ENCODE measurements at regions of chr4 and their contacts with region 1.

Region 1: GRCh38 chr4:121307445-121308327 is 73.1 kb downstream of the QRFPR start:
- DNase-seq: peak in 1 of 2 experiments; percentile 7
- H3K4me3 ChIP-seq: no peak overlapping the region
- H3K27ac ChIP-seq: no peak overlapping the region
- H3K4me1 ChIP-seq: no peaks in the 10 kb centered on the region
- H3K27me3 ChIP-seq: no peaks in the 10 kb centered on the region
- CTCF ChIP-seq: peak in 2 of 3 experiments; percentile 83 to 85; a peak in 3 of 4 replicates
- EP300 ChIP-seq: no peak
- POLR2A ChIP-seq: no peak
- RAD21 ChIP-seq: peak; percentile 94 to 95

Region 2: DNA sequence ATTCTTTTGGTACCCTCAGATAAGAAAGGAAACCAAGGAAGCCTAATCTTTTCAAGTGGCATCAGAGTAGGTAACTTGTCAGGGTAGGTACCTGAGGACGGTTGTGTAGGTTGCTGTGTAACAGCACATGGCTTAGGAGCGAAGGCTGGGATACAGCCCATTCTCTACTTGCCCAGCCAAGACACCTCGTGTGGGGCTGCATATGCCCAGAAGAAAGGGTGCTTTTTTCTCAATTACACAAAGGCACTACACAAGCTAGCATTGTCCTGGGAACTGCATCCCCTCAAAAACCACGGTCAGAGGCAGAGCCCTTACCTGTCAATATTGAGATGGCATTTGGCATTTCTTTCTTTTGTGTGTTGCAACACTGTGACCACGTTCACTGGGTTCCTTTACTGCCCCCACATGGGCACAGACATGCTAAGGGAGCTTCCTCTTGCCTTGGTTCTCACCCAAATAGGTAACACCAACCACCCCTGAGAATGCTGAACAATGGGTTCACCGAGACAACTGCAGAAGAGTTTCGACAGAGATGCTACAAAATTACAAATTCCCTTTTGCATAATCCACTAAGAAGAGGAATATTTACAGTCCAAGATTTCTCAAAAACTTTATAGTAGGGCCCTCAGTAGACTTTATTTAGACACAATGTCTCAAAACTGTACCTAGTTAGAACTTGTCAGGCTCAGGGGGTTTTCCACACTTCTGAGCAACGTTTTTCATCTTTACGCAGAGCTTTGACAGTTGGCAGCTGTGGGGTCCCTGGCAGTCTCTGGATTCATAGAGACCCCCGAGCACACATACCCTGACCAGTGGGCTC is 107.7 kb before region 1 on chr4:
- CTCF ChIA-PET with region 1: interaction called, 12 read pairs
- POLR2A ChIA-PET with region 1: no interaction called
- DNase-seq: no peak
- H3K4me3 ChIP-seq: no peak overlapping the region
- H3K27ac ChIP-seq: no peak overlapping the region
- H3K4me1 ChIP-seq: no peaks in the 10 kb centered on the region
- H3K27me3 ChIP-seq: no peaks in the 10 kb centered on the region
- CTCF ChIP-seq: peak in 1 of 3 experiments; percentile 0; a peak in 1 of 4 replicates
- EP300 ChIP-seq: no peak
- POLR2A ChIP-seq: no peak
- RAD21 ChIP-seq: no peak; a peak in 1 of 4 replicates

Region 3: DNA sequence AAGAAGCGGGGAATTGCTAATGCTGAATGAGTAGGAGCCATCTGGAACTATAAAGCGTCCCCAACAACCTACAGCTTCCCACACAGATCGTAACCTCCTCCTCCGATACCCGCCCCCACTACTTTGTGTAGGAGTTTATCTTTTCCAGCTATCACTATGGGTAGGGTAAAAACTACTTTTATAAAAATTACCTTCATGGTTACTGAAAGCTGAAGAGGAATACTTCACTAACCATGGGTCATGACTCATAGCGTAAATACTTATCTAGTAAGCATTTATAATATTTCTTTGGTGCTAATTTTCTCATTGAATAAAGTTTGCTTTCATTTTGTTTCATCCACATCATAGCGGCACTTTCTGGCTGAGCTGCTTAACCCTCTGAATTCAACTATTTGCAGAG is 64.2 kb before region 1 on chr4:
- CTCF ChIA-PET with region 1: interaction called, 11 read pairs
- POLR2A ChIA-PET with region 1: no interaction called
- DNase-seq: no peak
- H3K4me3 ChIP-seq: no peak overlapping the region
- H3K27ac ChIP-seq: no peak overlapping the region
- H3K4me1 ChIP-seq: no peaks in the 10 kb centered on the region
- H3K27me3 ChIP-seq: no peaks in the 10 kb centered on the region
- CTCF ChIP-seq: no peak
- EP300 ChIP-seq: no peak
- POLR2A ChIP-seq: no peak
- RAD21 ChIP-seq: no peak

Region 4: GRCh38 chr4:121252224-121252806 is 55.4 kb before region 1 on chr4:
- CTCF ChIA-PET with region 1: interaction called, 11 read pairs
- POLR2A ChIA-PET with region 1: no interaction called
- DNase-seq: peak; percentile 25 to 63
- H3K4me3 ChIP-seq: no peak overlapping the region
- H3K27ac ChIP-seq: no peak overlapping the region
- H3K4me1 ChIP-seq: no peaks in the 10 kb centered on the region; a peak in 1 of 7 replicates
- H3K27me3 ChIP-seq: peaks cover 0 to 1% (median 0%) of the 10 kb centered on the region in 4 experiments; a peak in 1 of 7 replicates
- CTCF ChIP-seq: peak; percentile 52 to 88 (median 79)
- EP300 ChIP-seq: no peak
- POLR2A ChIP-seq: no peak
- RAD21 ChIP-seq: peak; percentile 64 to 79

Region 5: GRCh38 chr4:121272526-121272925 is 35.2 kb before region 1 on chr4:
- CTCF ChIA-PET with region 1: interaction called, 23 read pairs
- POLR2A ChIA-PET with region 1: no interaction called
- DNase-seq: no peak
- H3K4me3 ChIP-seq: no peak overlapping the region
- H3K27ac ChIP-seq: no peak overlapping the region
- H3K4me1 ChIP-seq: peaks cover 0 to 4% (median 2%) of the 10 kb centered on the region in 4 experiments; a peak in 2 of 7 replicates
- H3K27me3 ChIP-seq: no peaks in the 10 kb centered on the region
- CTCF ChIP-seq: no peak
- EP300 ChIP-seq: no peak
- POLR2A ChIP-seq: no peak
- RAD21 ChIP-seq: no peak

Region 6: DNA sequence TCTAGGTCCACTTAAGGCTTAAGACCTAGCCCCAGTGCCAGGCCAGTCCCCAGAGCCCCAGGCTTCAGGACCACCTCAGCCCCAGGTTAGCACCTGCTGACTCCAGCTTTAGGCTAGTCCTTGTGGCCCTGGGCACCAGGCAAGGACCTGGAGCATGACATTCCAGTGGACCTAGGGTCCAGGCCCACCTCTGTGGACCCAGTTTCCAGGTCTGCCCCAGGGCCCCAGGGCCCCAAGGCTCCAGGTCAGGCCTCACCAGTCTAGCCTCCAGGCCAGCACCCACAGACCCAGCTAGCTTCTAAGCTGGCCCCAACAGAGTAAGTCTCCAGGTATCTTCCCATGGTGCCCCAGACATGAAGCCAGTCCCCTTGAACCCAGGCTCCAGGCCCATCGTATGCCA is 24.4 kb before region 1 on chr4:
- CTCF ChIA-PET with region 1: interaction called, 11 read pairs
- POLR2A ChIA-PET with region 1: no interaction called
- DNase-seq: no peak
- H3K4me3 ChIP-seq: no peak overlapping the region
- H3K27ac ChIP-seq: no peak overlapping the region
- H3K4me1 ChIP-seq: no peaks in the 10 kb centered on the region
- H3K27me3 ChIP-seq: no peaks in the 10 kb centered on the region
- CTCF ChIP-seq: no peak
- EP300 ChIP-seq: no peak
- POLR2A ChIP-seq: no peak
- RAD21 ChIP-seq: no peak

Measured in H1 (cell line).